H1 (cell line): ENCODE measurements at regions of chr5 and their contacts with region 1.

Region 1: GRCh38 chr5:16489322-16489791 is 23.8 kb upstream of the ZNF622 start:
- DNase-seq: no peak
- H3K4me3 ChIP-seq: no peak overlapping the region
- H3K27ac ChIP-seq: no peak overlapping the region
- H3K4me1 ChIP-seq: no peaks in the 10 kb centered on the region
- H3K27me3 ChIP-seq: no peaks in the 10 kb centered on the region
- CTCF ChIP-seq: peak in 2 of 3 experiments; percentile 53 to 63; a peak in 2 of 4 replicates
- EP300 ChIP-seq: no peak
- POLR2A ChIP-seq: no peak
- RAD21 ChIP-seq: peak; percentile 84 to 86

Region 2: GRCh38 chr5:16025681-16026080 is 463.7 kb before region 1 on chr5:
- CTCF ChIA-PET with region 1: no interaction called
- POLR2A ChIA-PET with region 1: no interaction called
- DNase-seq: no peak
- H3K4me3 ChIP-seq: no peak overlapping the region
- H3K27ac ChIP-seq: no peak overlapping the region
- H3K4me1 ChIP-seq: no peaks in the 10 kb centered on the region
- H3K27me3 ChIP-seq: no peaks in the 10 kb centered on the region
- CTCF ChIP-seq: no peak
- EP300 ChIP-seq: no peak
- POLR2A ChIP-seq: no peak
- RAD21 ChIP-seq: no peak

Region 3: DNA sequence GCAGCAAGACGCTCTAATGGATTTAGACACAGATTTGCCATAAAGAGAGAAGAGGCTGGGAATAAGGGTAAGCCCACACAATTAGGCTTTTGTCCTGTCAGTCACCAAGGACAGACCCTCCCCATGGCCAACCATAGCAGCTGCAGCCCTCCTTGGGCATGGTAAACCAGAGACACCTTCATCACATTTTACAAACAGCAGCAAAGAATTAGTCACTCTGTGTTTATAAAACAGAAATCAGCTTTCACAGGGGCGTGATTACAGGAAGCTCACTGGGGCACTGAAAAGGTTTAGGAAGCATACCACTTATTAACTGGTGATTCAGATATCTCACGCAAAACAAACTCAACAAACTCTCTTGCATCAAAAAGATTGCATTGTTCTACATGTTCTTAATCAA is 13.5 kb after region 1 on chr5:
- CTCF ChIA-PET with region 1: interaction called, 12 read pairs
- POLR2A ChIA-PET with region 1: interaction called, 3 read pairs
- DNase-seq: no peak
- H3K4me3 ChIP-seq: no peak overlapping the region
- H3K27ac ChIP-seq: no peak overlapping the region
- H3K4me1 ChIP-seq: no peaks in the 10 kb centered on the region
- H3K27me3 ChIP-seq: no peaks in the 10 kb centered on the region; a peak in 1 of 7 replicates
- CTCF ChIP-seq: no peak
- EP300 ChIP-seq: no peak
- POLR2A ChIP-seq: no peak
- RAD21 ChIP-seq: no peak

Region 4: GRCh38 chr5:16539169-16539721 is 49.9 kb after region 1 on chr5:
- CTCF ChIA-PET with region 1: interaction called, 155 read pairs
- POLR2A ChIA-PET with region 1: no interaction called
- DNase-seq: no peak
- H3K4me3 ChIP-seq: no peak overlapping the region
- H3K27ac ChIP-seq: no peak overlapping the region
- H3K4me1 ChIP-seq: no peaks in the 10 kb centered on the region
- H3K27me3 ChIP-seq: no peaks in the 10 kb centered on the region
- CTCF ChIP-seq: no peak
- EP300 ChIP-seq: no peak
- POLR2A ChIP-seq: no peak
- RAD21 ChIP-seq: no peak

Region 5: GRCh38 chr5:16776611-16777251 is 287.4 kb after region 1 on chr5:
- CTCF ChIA-PET with region 1: no interaction called
- POLR2A ChIA-PET with region 1: no interaction called
- DNase-seq: no peak
- H3K4me3 ChIP-seq: no peak overlapping the region
- H3K27ac ChIP-seq: no peak overlapping the region
- H3K4me1 ChIP-seq: peaks cover 0 to 9% (median 3%) of the 10 kb centered on the region in 4 experiments; a peak in 2 of 7 replicates
- H3K27me3 ChIP-seq: no peaks in the 10 kb centered on the region
- CTCF ChIP-seq: peak; percentile 69 to 87 (median 83)
- EP300 ChIP-seq: no peak
- POLR2A ChIP-seq: no peak
- RAD21 ChIP-seq: peak; percentile 69 to 82